ENCODE measurements at regions of chr12 and their contacts with region 1.

Region 1: GRCh38 chr12:6723607-6724396 is at the start of gene COPS7A:
- DNase-seq: peak; percentile 97
- ATAC-seq: peak; percentile 98
- H3K4me3 ChIP-seq: peak within 1 kb of the TSS; percentile 91
- H3K27ac ChIP-seq: peak within 1 kb of the TSS; percentile 80
- H3K4me1 ChIP-seq: no peaks in the 10 kb centered on the region; the same call in 1 of the 2 replicates
- H3K27me3 ChIP-seq: no peaks in the 10 kb centered on the region
- CTCF ChIP-seq: peak in 1 of 3 experiments; percentile 10; a peak in 1 of 6 replicates
- EP300 ChIP-seq: 0 out of 4 replicates have a peak, but pooled peaks of 1 of the 2 experiments have one; percentile 11
- POLR2A ChIP-seq: peak; percentile 93
- RAD21 ChIP-seq: no peak
- polyA plus RNA-seq, gene COPS7A: 25.7 to 26.1 TPM

Region 2: GRCh38 chr12:6620137-6620884 is 103.5 kb before region 1 on chr12:
- CTCF ChIA-PET with region 1: no interaction called
- POLR2A ChIA-PET with region 1: no interaction called
- RAD21 ChIA-PET with region 1: no interaction called
- SMC1A ChIA-PET with region 1: no interaction called
- in situ Hi-C with region 1: no loop called
- intact Hi-C with region 1: no loop called
- DNase-seq: no peak
- ATAC-seq: no peak
- H3K4me3 ChIP-seq: no peak overlapping the region
- H3K27ac ChIP-seq: no peak overlapping the region
- H3K4me1 ChIP-seq: no peaks in the 10 kb centered on the region
- H3K27me3 ChIP-seq: no peaks in the 10 kb centered on the region
- CTCF ChIP-seq: no peak
- EP300 ChIP-seq: no peak
- POLR2A ChIP-seq: peak; percentile 38; the same call in 1 of the 2 replicates
- RAD21 ChIP-seq: no peak

Region 3: DNA sequence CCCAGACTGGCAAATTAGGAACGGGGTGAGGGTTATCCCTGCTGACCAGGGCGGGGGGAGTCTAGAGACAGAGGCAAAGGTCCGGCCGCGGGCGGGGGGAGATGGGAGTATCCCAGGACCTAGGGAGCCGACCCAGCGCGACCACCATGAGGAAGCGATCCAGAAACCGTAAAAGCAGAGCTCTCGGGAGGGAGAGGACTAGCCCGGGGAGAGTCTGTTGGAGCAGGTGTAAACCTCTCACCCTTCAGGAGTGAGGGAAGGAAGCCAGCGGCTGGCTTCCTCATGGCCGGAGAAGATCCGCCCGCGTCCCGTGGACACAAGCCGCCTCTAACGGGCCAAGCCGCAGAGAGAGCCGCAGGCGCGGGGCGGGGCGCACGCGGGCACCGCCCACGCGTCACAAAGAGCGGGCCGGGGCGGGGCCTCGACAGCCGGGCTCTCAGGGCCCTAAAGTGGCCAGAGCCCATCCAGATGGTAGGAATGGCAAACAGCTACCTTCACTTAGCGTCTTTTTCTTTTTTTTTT is 76.7 kb before region 1 on chr12 and contains the start of gene ACRBP:
- CTCF ChIA-PET with region 1: no interaction called
- POLR2A ChIA-PET with region 1: interaction called, 12 read pairs
- RAD21 ChIA-PET with region 1: no interaction called
- SMC1A ChIA-PET with region 1: interaction called, 3 read pairs
- in situ Hi-C with region 1: no loop called
- intact Hi-C with region 1: no loop called
- DNase-seq: no peak
- ATAC-seq: peak; percentile 93
- H3K4me3 ChIP-seq: peak within 1 kb of the TSS; percentile 49
- H3K27ac ChIP-seq: no peak within 1 kb of the TSS; the same call in 1 of the 2 replicates
- H3K4me1 ChIP-seq: peaks cover 14% of the 10 kb centered on the region
- H3K27me3 ChIP-seq: no peaks in the 10 kb centered on the region
- CTCF ChIP-seq: no peak
- EP300 ChIP-seq: no peak
- POLR2A ChIP-seq: peak; percentile 19; the same call in 1 of the 2 replicates
- RAD21 ChIP-seq: no peak
- polyA plus RNA-seq, gene ACRBP: 0.64 to 0.80 TPM

Region 4: DNA sequence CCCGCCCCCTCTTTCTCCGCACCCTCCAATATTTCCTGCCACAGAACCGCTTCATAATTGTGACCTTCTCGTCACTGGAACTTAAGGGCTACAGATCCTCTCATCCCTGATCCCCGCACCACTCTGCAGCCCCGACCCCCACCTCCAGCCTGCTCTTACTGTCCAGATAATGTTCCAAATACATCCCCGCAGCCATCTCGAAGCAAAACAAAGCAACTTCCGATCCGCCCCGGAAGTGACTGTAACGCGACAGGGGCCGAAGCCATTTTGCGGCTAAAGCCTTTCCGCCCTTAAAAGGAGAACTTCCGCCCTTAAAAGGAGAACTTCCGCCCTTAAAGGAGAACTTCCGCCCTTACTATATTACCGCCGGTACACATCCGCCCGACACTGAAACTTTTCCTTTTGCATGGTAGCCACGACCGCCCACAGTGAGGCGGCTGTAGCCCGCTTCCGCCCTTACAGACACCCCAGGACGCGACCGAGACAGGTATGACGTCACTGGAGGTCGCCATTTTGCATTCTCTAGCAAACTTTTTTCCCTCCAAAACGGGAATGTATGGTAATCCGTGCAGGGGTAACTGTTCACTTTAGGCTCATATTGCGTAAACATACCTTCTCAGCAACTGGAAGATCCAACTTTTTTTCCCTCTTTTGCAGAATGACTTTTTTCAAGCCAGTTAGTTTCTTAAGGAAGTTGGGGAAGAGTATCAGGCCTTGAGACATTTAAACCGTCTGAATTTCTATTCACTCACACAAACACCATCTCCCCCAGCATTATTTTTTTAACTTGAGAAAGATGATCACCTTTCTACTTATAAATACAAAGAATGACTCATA is 60.7 kb before region 1 on chr12 and contains the start of gene ING4:
- CTCF ChIA-PET with region 1: interaction called, 6 read pairs
- POLR2A ChIA-PET with region 1: interaction called, 8 read pairs
- RAD21 ChIA-PET with region 1: interaction called, 10 read pairs
- SMC1A ChIA-PET with region 1: interaction called, 11 read pairs
- in situ Hi-C with region 1: no loop called
- intact Hi-C with region 1: no loop called
- DNase-seq: peak; percentile 96
- ATAC-seq: peak; percentile 100
- H3K4me3 ChIP-seq: peak within 1 kb of the TSS; percentile 96
- H3K27ac ChIP-seq: peak within 1 kb of the TSS; percentile 80
- H3K4me1 ChIP-seq: no peaks in the 10 kb centered on the region; the same call in 1 of the 2 replicates
- H3K27me3 ChIP-seq: no peaks in the 10 kb centered on the region
- CTCF ChIP-seq: no peak
- EP300 ChIP-seq: peak in 1 of 2 experiments; percentile 50; a peak in 1 of 4 replicates
- POLR2A ChIP-seq: peak; percentile 68
- RAD21 ChIP-seq: no peak
- polyA plus RNA-seq, gene ING4: 7.2 to 8.9 TPM

Region 5: DNA sequence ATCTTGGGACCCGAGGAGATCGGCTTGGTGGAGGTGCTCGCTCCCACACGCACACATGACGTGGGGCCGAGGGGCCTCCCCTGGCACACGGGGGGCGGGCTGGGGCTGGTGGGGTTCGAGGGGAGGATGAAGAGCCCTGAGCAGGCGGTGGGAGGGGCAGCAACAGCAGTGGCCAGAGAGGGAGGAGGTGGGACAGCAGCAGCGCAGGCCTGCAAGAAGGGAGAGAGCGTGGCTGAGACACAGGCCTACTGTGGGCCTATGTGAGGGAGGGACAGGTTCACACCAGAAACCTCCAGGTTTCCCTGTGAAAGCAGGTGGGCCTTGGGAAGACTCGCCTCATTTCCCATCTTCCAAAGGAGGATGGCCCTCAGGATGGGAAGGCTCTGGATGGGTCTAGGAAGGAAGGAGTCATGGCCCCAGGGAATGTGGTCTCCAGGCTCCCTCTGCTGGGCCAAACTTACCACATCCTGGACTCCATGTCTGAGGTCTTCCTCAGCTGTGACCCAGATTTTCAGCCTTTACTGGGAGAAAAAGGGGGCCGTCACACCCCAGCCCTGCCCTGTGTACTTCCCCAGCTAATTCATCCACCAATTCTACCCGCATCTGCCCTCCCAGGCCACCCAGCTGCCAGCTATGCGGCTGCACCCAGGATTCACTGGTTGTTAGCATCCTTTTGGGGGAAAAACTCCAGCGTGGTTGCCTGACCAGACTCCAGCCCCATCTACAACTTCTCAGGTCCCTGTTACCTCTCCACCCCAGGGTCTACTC is 26.0 kb before region 1 on chr12:
- CTCF ChIA-PET with region 1: interaction called, 5 read pairs
- POLR2A ChIA-PET with region 1: interaction called, 3 read pairs
- RAD21 ChIA-PET with region 1: interaction called, 6 read pairs
- SMC1A ChIA-PET with region 1: interaction called, 16 read pairs
- in situ Hi-C with region 1: no loop called
- intact Hi-C with region 1: no loop called
- DNase-seq: no peak
- ATAC-seq: peak; percentile 65
- H3K4me3 ChIP-seq: no peak overlapping the region
- H3K27ac ChIP-seq: no peak overlapping the region
- H3K4me1 ChIP-seq: peaks cover 12% of the 10 kb centered on the region
- H3K27me3 ChIP-seq: peaks cover 13 to 16% of the 10 kb centered on the region in 2 experiments
- CTCF ChIP-seq: peak; percentile 50 to 63 (median 60); a peak in 5 of 6 replicates
- EP300 ChIP-seq: no peak
- POLR2A ChIP-seq: no peak
- RAD21 ChIP-seq: peak; percentile 71

Region 6: GRCh38 chr12:6735448-6736191 is 11.8 kb after region 1 on chr12:
- CTCF ChIA-PET with region 1: interaction called, 11 read pairs
- POLR2A ChIA-PET with region 1: no interaction called
- RAD21 ChIA-PET with region 1: no interaction called
- SMC1A ChIA-PET with region 1: interaction called, 3 read pairs
- in situ Hi-C with region 1: no loop called
- intact Hi-C with region 1: no loop called
- DNase-seq: no peak
- ATAC-seq: peak; percentile 91
- H3K4me3 ChIP-seq: no peak overlapping the region
- H3K27ac ChIP-seq: 0 out of 2 replicates have a peak overlapping the region, but pooled peaks have one; percentile 60
- H3K4me1 ChIP-seq: peaks cover 5% of the 10 kb centered on the region; the same call in 1 of the 2 replicates
- H3K27me3 ChIP-seq: no peaks in the 10 kb centered on the region
- CTCF ChIP-seq: peak; percentile 59 to 64 (median 61)
- EP300 ChIP-seq: no peak
- POLR2A ChIP-seq: no peak
- RAD21 ChIP-seq: peak; percentile 67

Region 7: DNA sequence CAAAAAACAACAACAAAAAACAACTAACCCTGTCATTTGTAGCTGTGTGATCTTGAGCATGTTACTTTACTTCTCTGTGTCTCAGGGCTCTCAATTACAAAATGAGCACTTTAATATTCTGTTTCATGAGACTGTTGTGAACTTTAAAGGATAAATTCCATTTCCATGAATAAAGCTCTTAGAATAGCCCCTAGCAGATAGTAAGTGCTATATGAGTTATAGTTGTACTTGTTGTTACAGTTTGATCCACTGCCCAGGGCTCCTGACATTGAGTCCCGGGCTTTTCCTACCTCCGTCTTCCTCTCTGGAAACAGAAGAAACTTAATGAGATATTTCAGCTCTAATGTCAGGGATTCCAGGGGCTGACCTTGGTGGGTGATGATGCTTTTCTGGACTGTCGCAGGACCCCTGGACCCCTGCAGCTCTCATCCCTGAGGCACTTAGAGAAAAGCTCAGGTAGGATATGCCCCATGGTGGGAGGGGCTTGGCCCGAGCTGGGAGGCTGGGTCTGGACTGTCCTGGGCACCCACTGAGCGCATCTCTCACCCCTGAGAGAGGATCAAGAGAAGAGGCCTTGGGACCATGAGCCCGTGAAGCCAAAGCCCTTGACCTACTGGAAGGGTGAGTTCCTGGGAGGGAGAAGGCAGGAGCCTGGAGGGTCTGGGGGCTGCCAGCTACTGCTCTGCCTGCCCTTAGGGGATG is 109.5 kb after region 1 on chr12:
- CTCF ChIA-PET with region 1: interaction called, 11 read pairs
- POLR2A ChIA-PET with region 1: no interaction called
- RAD21 ChIA-PET with region 1: no interaction called
- SMC1A ChIA-PET with region 1: no interaction called
- in situ Hi-C with region 1: no loop called
- intact Hi-C with region 1: no loop called
- DNase-seq: no peak
- ATAC-seq: no peak
- H3K4me3 ChIP-seq: no peak overlapping the region
- H3K27ac ChIP-seq: no peak overlapping the region
- H3K4me1 ChIP-seq: peaks cover 4% of the 10 kb centered on the region
- H3K27me3 ChIP-seq: peaks cover 11 to 17% of the 10 kb centered on the region in 2 experiments
- CTCF ChIP-seq: no peak
- EP300 ChIP-seq: no peak
- POLR2A ChIP-seq: no peak
- RAD21 ChIP-seq: no peak

Region 8: GRCh38 chr12:6851921-6852650 is 128.3 kb after region 1 on chr12 and contains the start of gene USP5:
- CTCF ChIA-PET with region 1: interaction called, 6 read pairs
- POLR2A ChIA-PET with region 1: interaction called, 19 read pairs
- RAD21 ChIA-PET with region 1: interaction called, 6 read pairs
- SMC1A ChIA-PET with region 1: interaction called, 6 read pairs
- in situ Hi-C with region 1: no loop called
- intact Hi-C with region 1: no loop called
- DNase-seq: peak; percentile 99
- ATAC-seq: peak; percentile 87
- H3K4me3 ChIP-seq: peak within 1 kb of the TSS; percentile 82
- H3K27ac ChIP-seq: peak within 1 kb of the TSS; percentile 84
- H3K4me1 ChIP-seq: peaks cover 28% of the 10 kb centered on the region
- H3K27me3 ChIP-seq: no peaks in the 10 kb centered on the region
- CTCF ChIP-seq: no peak
- EP300 ChIP-seq: no peak
- POLR2A ChIP-seq: peak; percentile 89
- RAD21 ChIP-seq: no peak
- polyA plus RNA-seq, gene USP5: 2.5 to 5.2 TPM

Region 9: GRCh38 chr12:7099290-7099996 is 375.6 kb after region 1 on chr12:
- CTCF ChIA-PET with region 1: no interaction called
- POLR2A ChIA-PET with region 1: no interaction called
- RAD21 ChIA-PET with region 1: no interaction called
- SMC1A ChIA-PET with region 1: no interaction called
- in situ Hi-C with region 1: no loop called
- intact Hi-C with region 1: no loop called
- DNase-seq: no peak
- ATAC-seq: no peak
- H3K4me3 ChIP-seq: no peak overlapping the region
- H3K27ac ChIP-seq: no peak overlapping the region
- H3K4me1 ChIP-seq: no peaks in the 10 kb centered on the region
- H3K27me3 ChIP-seq: no peaks in the 10 kb centered on the region
- CTCF ChIP-seq: no peak
- EP300 ChIP-seq: no peak
- POLR2A ChIP-seq: no peak
- RAD21 ChIP-seq: no peak